ENCODE measurements at regions of chr2 and their contacts with region 1.

Region 1: GRCh38 chr2:37231241-37232130 is at the starts of genes CEBPZ and NDUFAF7:
- DNase-seq: peak; percentile 95 to 96
- ATAC-seq: peak; percentile 98
- H3K4me3 ChIP-seq: peak within 1 kb of the TSS; percentile 76 to 97
- H3K27ac ChIP-seq: peak within 1 kb of the TSS; percentile 29 to 79
- H3K4me1 ChIP-seq: peaks cover 4 to 10% of the 10 kb centered on the region in 2 donors
- H3K27me3 ChIP-seq: no peaks in the 10 kb centered on the region
- total RNA-seq, gene CEBPZ: 37.0 to 38.1 TPM
- total RNA-seq, gene NDUFAF7: 17.0 to 23.9 TPM

Region 2: GRCh38 chr2:37324786-37325624 is 93.5 kb after region 1 on chr2 and contains the start of gene PRKD3:
- intact Hi-C with region 1: loop called in 1 of 2 experiments (anchors 5 kb)
- DNase-seq: peak in 1 of 2 donors; percentile 67
- ATAC-seq: peak; percentile 92
- H3K4me3 ChIP-seq: peak within 1 kb of the TSS; percentile 89 to 100
- H3K27ac ChIP-seq: peak within 1 kb of the TSS; percentile 71 to 90
- H3K4me1 ChIP-seq: no peaks in the 10 kb centered on the region
- H3K27me3 ChIP-seq: no peaks in the 10 kb centered on the region
- total RNA-seq, gene PRKD3: 43.2 to 54.8 TPM

Measured in aorta (tissue), 5 donors.